WTC11 (cell line): ENCODE measurements at regions of chr1 and their contacts with region 1.

Region 1: GRCh38 chr1:175154629-175155472 is 37.7 kb downstream of the KIAA0040 start:
- DNase-seq: peak; percentile 77
- ATAC-seq: peak; percentile 28
- H3K4me3 Mint-ChIP-seq: no peak overlapping the region
- H3K27ac Mint-ChIP-seq: no peak overlapping the region
- H3K4me1 Mint-ChIP-seq: peaks cover 19% of the 10 kb centered on the region
- H3K27me3 Mint-ChIP-seq: peaks cover 19% of the 10 kb centered on the region
- CTCF ChIP-seq: peak; percentile 82

Region 2: DNA sequence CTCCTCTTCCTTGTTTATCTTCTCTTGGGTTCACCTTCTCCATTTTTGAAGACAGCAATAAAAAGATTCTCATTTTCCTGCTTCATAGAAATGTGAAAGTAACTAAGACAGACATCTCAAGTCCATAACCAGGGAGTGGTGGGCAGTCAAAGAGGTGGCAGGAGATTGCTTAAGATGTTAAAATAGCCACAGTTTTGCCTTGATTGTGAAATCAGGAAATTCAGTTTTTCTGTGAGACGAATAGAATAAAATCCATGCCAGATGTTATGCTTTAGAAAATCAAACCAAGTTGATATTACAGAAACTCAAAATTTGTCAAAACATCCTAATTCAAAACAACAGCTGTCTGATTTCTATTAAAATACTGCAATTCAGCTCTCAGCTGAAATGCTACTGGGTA is 30.0 kb before region 1 on chr1:
- CTCF ChIA-PET with region 1: interaction called, 69 read pairs
- POLR2A ChIA-PET with region 1: no interaction called
- DNase-seq: no peak
- ATAC-seq: no peak
- H3K4me3 Mint-ChIP-seq: no peak overlapping the region
- H3K27ac Mint-ChIP-seq: 0 out of 2 replicates have a peak overlapping the region, but pooled peaks have one; percentile 51
- H3K4me1 Mint-ChIP-seq: peaks cover 23% of the 10 kb centered on the region
- H3K27me3 Mint-ChIP-seq: no peaks in the 10 kb centered on the region
- CTCF ChIP-seq: no peak

Region 3: DNA sequence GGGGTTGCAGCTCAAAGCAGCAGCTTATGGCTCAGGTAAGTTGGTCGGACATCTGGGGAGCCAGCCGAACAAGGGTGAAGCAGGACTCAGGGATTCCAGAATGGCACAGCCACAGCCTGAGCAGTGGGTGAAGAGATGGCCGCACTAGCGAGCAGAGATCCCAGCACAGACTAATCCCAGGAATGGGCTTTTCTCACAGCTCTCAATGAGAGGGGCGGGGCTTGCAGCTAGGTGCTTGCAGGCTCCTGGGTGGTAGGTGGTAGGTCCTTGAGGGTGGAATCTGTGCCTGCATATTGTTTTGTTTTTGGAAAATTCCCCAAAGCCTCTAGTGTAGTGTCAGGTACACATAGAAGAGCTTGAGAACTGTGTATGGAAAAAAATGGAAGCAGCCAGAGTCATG is 28.7 kb after region 1 on chr1:
- CTCF ChIA-PET with region 1: interaction called, 11 read pairs
- POLR2A ChIA-PET with region 1: no interaction called
- DNase-seq: peak; percentile 33
- ATAC-seq: peak; percentile 91
- H3K4me3 Mint-ChIP-seq: no peak overlapping the region
- H3K27ac Mint-ChIP-seq: no peak overlapping the region
- H3K4me1 Mint-ChIP-seq: peaks cover 22% of the 10 kb centered on the region
- H3K27me3 Mint-ChIP-seq: no peaks in the 10 kb centered on the region
- CTCF ChIP-seq: no peak

Region 4: GRCh38 chr1:175221666-175222175 is 66.9 kb after region 1 on chr1:
- CTCF ChIA-PET with region 1: interaction called, 29 read pairs
- POLR2A ChIA-PET with region 1: no interaction called
- DNase-seq: peak; percentile 63
- ATAC-seq: peak; percentile 87
- H3K4me3 Mint-ChIP-seq: no peak overlapping the region
- H3K27ac Mint-ChIP-seq: peak overlapping the region; percentile 75
- H3K4me1 Mint-ChIP-seq: peaks cover 31% of the 10 kb centered on the region
- H3K27me3 Mint-ChIP-seq: no peaks in the 10 kb centered on the region
- CTCF ChIP-seq: no peak

Region 5: DNA sequence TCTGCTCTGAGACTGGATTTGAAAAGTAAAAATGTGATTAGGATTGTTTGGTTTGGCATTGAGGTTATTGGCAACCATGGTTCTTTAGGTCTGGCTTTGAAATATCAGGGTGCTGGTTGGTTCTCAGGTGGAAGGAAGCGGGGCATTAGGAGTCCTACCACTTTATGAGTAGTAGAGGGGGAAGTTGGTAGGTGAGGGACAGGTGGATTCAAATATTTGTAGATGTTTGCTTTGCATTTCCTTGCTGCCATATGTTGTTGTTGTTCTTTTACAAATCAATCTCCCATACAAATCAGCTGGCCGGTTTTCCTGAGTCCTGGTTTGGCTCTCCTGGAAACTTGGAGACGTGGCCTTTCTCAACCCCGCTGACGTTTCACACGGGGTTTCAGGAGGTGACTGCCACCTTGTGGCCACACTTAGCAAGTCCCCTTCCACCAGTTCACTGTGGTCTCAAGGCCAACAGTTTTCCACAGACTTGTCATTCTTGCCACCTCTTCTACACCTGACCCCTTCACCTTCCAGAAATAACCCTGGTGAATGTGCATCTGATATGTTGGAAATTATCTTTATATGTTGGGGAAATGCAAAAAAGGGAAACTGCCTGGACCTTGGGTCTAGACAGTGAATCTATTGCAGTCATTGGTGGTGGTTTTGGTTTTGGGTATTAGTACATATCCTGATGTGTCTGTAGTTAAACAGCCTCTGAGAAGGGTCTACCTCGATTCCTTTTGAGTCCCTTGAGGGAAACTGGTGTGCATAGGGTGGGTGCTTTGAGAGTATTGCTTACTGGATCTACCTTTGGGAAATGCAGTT is 164.8 kb after region 1 on chr1:
- CTCF ChIA-PET with region 1: interaction called, 158 read pairs
- POLR2A ChIA-PET with region 1: no interaction called
- DNase-seq: peak; percentile 73
- ATAC-seq: peak; percentile 85
- H3K4me3 Mint-ChIP-seq: no peak overlapping the region
- H3K27ac Mint-ChIP-seq: no peak overlapping the region
- H3K4me1 Mint-ChIP-seq: peaks cover 4% of the 10 kb centered on the region; the same call in 1 of the 2 replicates
- H3K27me3 Mint-ChIP-seq: no peaks in the 10 kb centered on the region
- CTCF ChIP-seq: peak; percentile 89

Region 6: DNA sequence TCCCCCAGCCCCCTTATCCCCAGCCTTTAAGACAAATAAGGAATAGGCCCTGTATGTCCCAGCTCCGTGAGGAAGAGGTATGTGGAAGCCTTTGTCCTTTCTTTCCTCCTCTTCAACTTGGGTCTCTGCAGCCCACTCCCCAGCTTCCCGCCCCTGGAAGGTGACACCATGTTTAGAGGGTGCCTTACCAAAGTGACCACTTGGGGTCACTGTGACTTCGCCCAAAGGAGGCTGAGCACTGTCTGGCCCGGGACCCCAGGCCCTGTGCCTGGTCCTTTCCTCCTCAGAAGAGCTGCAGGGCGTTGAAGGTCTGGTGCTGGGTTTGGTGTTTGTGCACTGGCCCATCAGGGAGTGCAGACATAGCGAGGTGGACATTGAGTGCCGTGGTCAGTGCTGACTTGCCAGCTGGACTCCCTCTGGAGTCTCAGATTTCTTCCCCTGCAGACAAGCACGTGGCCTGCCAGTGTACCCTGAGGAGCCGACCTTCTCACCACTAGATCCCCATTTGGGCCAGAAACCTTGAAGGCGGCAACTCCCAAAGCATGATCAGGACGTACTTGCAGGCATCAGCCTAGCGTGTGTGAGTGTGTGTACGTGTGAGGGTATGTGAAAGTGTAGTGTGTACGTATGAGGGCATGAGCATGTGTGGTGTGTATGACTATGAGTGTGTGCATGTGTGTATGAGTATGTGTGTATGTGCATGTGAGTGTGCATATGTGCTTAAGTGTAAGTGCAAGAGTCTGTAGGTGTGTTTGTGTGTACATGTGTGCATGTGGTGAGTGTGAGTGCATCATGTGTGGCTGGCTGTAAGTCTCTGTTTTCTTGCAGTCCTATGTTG is 219.2 kb after region 1 on chr1:
- CTCF ChIA-PET with region 1: interaction called, 52 read pairs
- POLR2A ChIA-PET with region 1: no interaction called
- DNase-seq: peak; percentile 75
- ATAC-seq: peak; percentile 94
- H3K4me3 Mint-ChIP-seq: no peak overlapping the region
- H3K27ac Mint-ChIP-seq: no peak overlapping the region
- H3K4me1 Mint-ChIP-seq: peaks cover 6% of the 10 kb centered on the region
- H3K27me3 Mint-ChIP-seq: peaks cover 7% of the 10 kb centered on the region; the same call in 1 of the 2 replicates
- CTCF ChIP-seq: peak; percentile 82